Heart right ventricle (tissue), 16 donors: ENCODE measurements at regions of chr19 and their contacts with region 1.

Region 1: DNA sequence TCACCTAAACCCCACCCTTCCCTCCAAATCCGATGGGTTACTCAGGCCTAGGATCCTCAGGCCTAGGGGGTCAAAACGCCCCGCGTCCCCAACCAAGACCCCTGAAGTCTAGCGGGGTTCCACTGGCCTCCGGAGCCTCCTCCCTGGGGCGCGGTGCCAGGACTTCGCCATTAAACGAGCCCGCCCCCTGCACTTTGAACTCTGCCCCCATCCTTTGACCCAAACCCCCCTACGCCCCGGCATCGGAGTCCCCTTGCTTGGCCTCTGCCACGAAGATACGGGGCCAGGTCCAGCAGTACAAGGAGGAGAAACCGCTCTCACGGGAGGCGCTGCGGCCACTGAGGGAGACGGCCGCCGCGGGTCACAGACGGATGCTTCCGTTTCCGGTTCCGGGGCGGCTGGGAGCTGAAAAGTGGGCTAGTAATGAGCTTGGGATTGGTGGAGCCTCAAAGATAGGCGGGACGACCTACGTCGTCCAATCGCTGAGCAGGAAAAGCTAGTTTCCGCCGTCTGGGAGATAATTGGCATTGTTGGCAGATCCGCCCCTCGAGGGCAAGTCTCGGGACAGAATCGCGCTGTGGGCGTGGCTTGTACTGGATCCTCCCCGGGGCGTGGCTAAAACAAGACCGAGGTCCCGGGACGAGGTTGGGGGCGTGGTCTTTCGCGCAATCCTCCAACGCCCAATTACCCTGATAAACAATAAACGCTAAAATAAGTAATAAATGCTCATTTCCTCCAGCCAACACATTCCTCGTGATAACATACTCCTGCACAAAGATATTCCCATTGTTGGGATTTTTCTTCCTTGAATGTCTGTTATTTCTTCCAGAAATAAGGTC is 5.7 kb upstream of the ZNF77 start:
- DNase-seq: peak; percentile 100
- ATAC-seq: peak; percentile 94 to 98 (median 96)
- H3K4me3 ChIP-seq: peak overlapping the region; percentile 68 to 97 (median 80)
- H3K27ac ChIP-seq: peak overlapping the region; percentile 90 to 99 (median 95)
- H3K4me1 ChIP-seq: peaks cover 7 to 35% (median 19%) of the 10 kb centered on the region in 9 donors
- H3K27me3 ChIP-seq: no peaks in the 10 kb centered on the region
- CTCF ChIP-seq: no peak

Region 2: DNA sequence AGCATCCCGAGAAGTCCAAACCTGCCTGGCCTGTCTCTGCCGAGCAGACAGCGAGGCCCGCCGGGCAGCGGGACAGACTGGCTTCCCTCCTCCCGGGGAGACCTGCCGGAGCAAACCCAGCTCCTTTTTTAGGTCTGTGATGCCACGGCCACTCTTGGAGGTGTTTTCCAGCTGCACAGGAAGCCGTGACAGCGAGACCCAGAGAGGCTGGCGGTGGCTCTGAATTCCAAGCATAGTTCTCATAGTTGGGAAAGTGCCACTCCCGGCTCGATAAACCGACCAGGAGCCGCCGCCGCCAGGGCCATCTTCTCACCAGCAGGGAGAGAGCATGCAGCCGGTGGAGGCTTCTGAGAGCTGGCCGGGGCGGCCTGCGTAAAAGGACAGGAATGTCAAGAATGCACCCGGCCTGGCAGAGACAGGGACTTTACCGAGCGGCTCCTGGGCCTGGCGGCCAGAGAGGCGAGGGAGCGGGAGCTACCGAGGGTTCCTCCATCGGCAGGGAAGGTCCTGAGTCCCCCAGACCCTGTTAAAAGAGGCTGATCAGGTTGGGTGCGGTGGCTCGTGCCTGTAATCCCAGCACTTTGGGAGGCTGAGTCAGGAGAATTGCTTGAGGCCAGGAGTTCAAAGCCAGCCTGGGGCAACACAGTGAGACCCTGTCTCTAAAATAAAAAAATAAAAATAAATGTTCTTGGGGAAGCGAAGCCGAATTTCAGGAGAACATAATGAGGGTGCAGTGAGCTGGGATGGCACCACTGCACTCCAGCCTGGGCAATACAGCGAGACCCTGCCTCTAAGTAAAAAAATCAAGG is 409.7 kb before region 1 on chr19:
- intact Hi-C with region 1: no loop called
- DNase-seq: peak; percentile 87 to 89
- ATAC-seq: peak; percentile 71 to 87 (median 79)
- H3K4me3 ChIP-seq: peak overlapping the region in 5 of 10 donors; percentile 4 to 16 (median 12)
- H3K27ac ChIP-seq: peak overlapping the region; percentile 48 to 97 (median 86)
- H3K4me1 ChIP-seq: peaks cover 29 to 65% (median 57%) of the 10 kb centered on the region in 9 donors
- H3K27me3 ChIP-seq: no peaks in the 10 kb centered on the region
- CTCF ChIP-seq: peak in 6 of 9 donors; percentile 10 to 52 (median 40)

Region 3: GRCh38 chr19:2900296-2901252 is 49.9 kb before region 1 on chr19 and contains the start of gene ZNF57:
- intact Hi-C with region 1: loop called in 4 of 10 experiments (anchors 2 to 10 kb)
- DNase-seq: peak; percentile 100
- ATAC-seq: peak; percentile 98 to 100 (median 100)
- H3K4me3 ChIP-seq: peak within 1 kb of the TSS; percentile 54 to 94 (median 68)
- H3K27ac ChIP-seq: peak within 1 kb of the TSS; percentile 31 to 90 (median 81)
- H3K4me1 ChIP-seq: peaks cover 0 to 10% (median 6%) of the 10 kb centered on the region in 9 donors
- H3K27me3 ChIP-seq: no peaks in the 10 kb centered on the region
- CTCF ChIP-seq: no peak
- total RNA-seq, gene ZNF57: 1.0 to 5.5 (median 3.0) TPM

Region 4: GRCh38 chr19:2977001-2977685 is 26.6 kb after region 1 on chr19 and contains the start of gene TLE6:
- intact Hi-C with region 1: loop called in 1 of 10 experiments (anchors 2 kb)
- DNase-seq: peak; percentile 96 to 97
- ATAC-seq: peak; percentile 94 to 97 (median 96)
- H3K4me3 ChIP-seq: peak within 1 kb of the TSS; percentile 30 to 63 (median 54)
- H3K27ac ChIP-seq: peak within 1 kb of the TSS in 9 of 10 donors; percentile 25 to 68 (median 51)
- H3K4me1 ChIP-seq: peaks cover 20 to 63% (median 57%) of the 10 kb centered on the region in 9 donors
- H3K27me3 ChIP-seq: no peaks in the 10 kb centered on the region
- CTCF ChIP-seq: no peak
- total RNA-seq, gene TLE6: 0.34 to 2.8 (median 0.45) TPM in 7 of 10 donors, not detected in the others

Region 5: DNA sequence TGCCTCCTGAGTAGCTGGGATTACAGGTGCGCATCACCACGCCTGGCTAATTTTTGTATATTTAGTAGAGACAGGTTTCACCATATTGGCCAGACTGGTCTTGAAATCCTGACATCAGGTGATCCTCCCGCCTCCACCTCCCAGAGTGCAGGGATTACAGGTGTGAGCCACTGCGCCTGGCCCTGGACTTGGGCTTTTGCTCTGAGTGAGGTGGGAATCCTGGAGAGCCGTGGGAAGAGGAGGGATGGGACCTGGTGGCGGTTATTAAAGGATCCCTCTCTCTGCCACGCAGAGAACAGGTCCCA is 113.4 kb after region 1 on chr19:
- intact Hi-C with region 1: no loop called
- DNase-seq: no peak
- ATAC-seq: no peak
- H3K4me3 ChIP-seq: no peak overlapping the region
- H3K27ac ChIP-seq: peak overlapping the region in 4 of 10 donors; percentile 97 to 100 (median 99)
- H3K4me1 ChIP-seq: peaks cover 2 to 35% (median 32%) of the 10 kb centered on the region in 9 donors
- H3K27me3 ChIP-seq: no peaks in the 10 kb centered on the region
- CTCF ChIP-seq: no peak

Region 6: DNA sequence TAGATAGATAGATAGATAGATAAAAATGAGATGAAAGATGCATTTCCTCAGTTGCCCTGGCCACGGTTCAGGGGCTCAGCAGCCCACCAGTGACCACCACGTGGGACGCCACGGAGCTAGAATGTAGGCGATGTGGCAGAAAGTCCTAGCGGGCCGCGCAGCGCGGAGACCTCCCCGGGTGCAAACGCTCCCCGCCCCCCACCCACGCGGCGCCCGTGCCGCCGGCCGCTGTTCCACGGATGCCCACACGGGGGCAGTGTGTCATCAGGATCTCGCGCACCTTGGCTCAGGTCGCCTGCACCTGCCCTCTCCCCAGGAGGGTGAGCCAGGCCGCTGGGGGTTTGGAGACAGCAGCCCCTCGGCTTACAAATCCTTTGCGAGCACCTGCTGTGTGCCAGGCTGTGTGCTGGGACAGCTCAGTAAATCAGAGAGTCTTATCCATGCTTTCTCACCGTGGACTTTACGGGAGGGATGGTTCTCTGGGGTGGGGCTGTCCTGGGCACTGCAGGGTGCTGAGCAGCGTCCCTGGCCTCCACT is 125.5 kb after region 1 on chr19:
- intact Hi-C with region 1: loop called in 2 of 10 experiments (anchors 10 kb)
- DNase-seq: peak in 1 of 2 donors; percentile 70
- ATAC-seq: peak; percentile 44 to 82 (median 72)
- H3K4me3 ChIP-seq: peak overlapping the region in 1 of 10 donors; percentile 25
- H3K27ac ChIP-seq: no peak overlapping the region
- H3K4me1 ChIP-seq: peaks cover 0 to 17% (median 8%) of the 10 kb centered on the region in 9 donors
- H3K27me3 ChIP-seq: no peaks in the 10 kb centered on the region
- CTCF ChIP-seq: peak; percentile 86 to 95 (median 90)

Region 7: DNA sequence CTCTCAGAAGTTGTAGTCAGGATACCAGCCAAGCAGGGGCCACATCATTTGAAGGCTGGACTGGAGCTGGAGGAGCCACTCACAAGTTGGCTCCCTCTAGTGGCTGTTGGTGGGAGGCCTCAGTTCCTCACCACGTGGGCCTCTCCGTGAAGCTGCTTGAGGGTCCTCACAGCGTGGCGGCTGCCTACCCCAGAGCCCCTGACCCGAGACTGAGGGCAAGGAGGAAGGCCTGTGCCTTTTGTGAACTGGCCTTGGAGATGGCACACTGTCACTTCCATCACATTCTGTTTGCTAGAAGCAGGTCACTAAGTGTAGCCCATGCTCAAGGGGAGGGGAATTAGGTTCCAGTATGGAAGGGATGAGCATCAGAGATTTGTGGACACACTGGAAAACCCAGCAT is 158.3 kb after region 1 on chr19:
- intact Hi-C with region 1: loop called in 4 of 10 experiments (anchors 5 to 10 kb)
- DNase-seq: peak; percentile 53 to 55
- ATAC-seq: peak in 6 of 8 donors; percentile 26 to 41 (median 36)
- H3K4me3 ChIP-seq: no peak overlapping the region
- H3K27ac ChIP-seq: peak overlapping the region in 1 of 10 donors; percentile 31
- H3K4me1 ChIP-seq: peaks cover 7 to 59% (median 22%) of the 10 kb centered on the region in 9 donors
- H3K27me3 ChIP-seq: no peaks in the 10 kb centered on the region
- CTCF ChIP-seq: peak; percentile 61 to 92 (median 79)